HepG2 (cell line): ENCODE measurements at regions of chr11 and their contacts with region 1.

Region 1: GRCh38 chr11:73652046-73652730 is 5.8 kb downstream of the PLEKHB1 start:
- DNase-seq: peak; percentile 97
- ATAC-seq: peak; percentile 87
- H3K4me3 ChIP-seq: peak overlapping the region in 1 of 3 experiments; percentile 26; a peak in 2 of 6 replicates
- H3K27ac ChIP-seq: peak overlapping the region; percentile 89
- H3K4me1 ChIP-seq: peaks cover 79% of the 10 kb centered on the region
- H3K27me3 ChIP-seq: no peaks in the 10 kb centered on the region
- CTCF ChIP-seq: peak; percentile 37
- EP300 ChIP-seq: peak; percentile 71 to 73
- POLR2A ChIP-seq: peak in 1 of 2 experiments; percentile 46; a peak in 1 of 4 replicates
- RAD21 ChIP-seq: no peak; the same call in 1 of the 2 replicates

Region 2: DNA sequence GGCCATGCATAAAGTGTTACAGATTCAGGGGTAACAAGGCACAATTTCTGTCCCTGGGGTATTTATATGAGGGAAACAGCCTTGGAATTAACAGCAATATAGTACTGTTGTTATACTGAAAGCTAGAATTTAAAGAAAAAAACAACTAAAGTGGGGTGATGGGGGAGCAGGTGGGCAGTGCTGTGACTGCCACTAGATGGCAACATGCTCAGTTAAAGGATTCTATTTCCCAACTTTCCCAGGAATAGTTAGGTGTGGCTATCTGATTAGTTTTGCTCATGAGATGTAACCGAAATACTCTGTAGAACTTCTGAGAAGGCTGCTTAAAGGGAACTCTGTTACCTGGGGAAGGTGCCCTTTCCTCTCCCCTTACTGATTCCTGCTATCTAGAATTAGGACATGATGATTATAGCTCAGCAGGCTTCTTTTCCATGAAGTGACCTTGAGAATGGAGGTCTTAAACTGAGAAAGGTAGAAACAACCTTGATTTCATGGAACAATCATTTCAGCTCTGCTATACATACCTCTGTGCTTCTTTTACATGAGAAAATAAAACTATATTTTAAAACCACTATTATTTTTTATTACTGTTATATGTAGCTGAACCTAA is 173.3 kb before region 1 on chr11:
- CTCF ChIA-PET with region 1: no interaction called
- POLR2A ChIA-PET with region 1: no interaction called
- in situ Hi-C with region 1: loop called (anchors 10 kb)
- intact Hi-C with region 1: loop called (anchors 10 kb)
- DNase-seq: peak; percentile 37
- ATAC-seq: peak; percentile 82
- H3K4me3 ChIP-seq: no peak overlapping the region
- H3K27ac ChIP-seq: no peak overlapping the region
- H3K4me1 ChIP-seq: peaks cover 8% of the 10 kb centered on the region
- H3K27me3 ChIP-seq: no peaks in the 10 kb centered on the region
- CTCF ChIP-seq: peak; percentile 74
- EP300 ChIP-seq: no peak
- POLR2A ChIP-seq: no peak
- RAD21 ChIP-seq: peak; percentile 50; the same call in 1 of the 2 replicates

Region 3: DNA sequence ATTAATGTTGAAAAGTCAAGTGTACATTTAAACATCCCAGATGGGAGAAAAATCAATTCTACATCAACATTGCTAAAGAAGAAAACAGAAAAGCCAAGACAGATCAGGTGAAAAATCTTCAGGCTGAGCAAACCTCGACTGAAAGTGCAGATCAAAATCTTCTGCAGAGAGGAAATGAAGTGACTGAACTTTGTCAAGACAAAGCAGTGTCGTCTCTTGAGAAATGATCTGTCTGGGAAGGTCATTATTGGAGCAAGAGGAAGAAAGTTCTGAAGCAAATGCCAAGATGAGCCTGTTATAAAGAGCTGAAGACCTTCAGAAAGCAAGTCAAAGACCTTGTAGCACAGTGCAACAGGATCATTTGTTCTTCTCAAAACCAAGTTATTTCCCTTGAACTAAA is 11.6 kb before region 1 on chr11:
- CTCF ChIA-PET with region 1: no interaction called
- POLR2A ChIA-PET with region 1: interaction called, 3 read pairs
- in situ Hi-C with region 1: no loop called
- intact Hi-C with region 1: loop called (anchors 2 kb)
- DNase-seq: no peak
- ATAC-seq: no peak
- H3K4me3 ChIP-seq: no peak overlapping the region
- H3K27ac ChIP-seq: no peak overlapping the region
- H3K4me1 ChIP-seq: peaks cover 7% of the 10 kb centered on the region; the same call in 1 of the 2 replicates
- H3K27me3 ChIP-seq: no peaks in the 10 kb centered on the region
- CTCF ChIP-seq: no peak
- EP300 ChIP-seq: no peak
- POLR2A ChIP-seq: no peak
- RAD21 ChIP-seq: no peak

Region 4: GRCh38 chr11:74237541-74237940 is 585.4 kb after region 1 on chr11:
- CTCF ChIA-PET with region 1: no interaction called
- POLR2A ChIA-PET with region 1: no interaction called
- in situ Hi-C with region 1: no loop called
- intact Hi-C with region 1: no loop called
- DNase-seq: no peak
- ATAC-seq: no peak
- H3K4me3 ChIP-seq: no peak overlapping the region
- H3K27ac ChIP-seq: no peak overlapping the region
- H3K4me1 ChIP-seq: no peaks in the 10 kb centered on the region
- H3K27me3 ChIP-seq: no peaks in the 10 kb centered on the region
- CTCF ChIP-seq: no peak
- EP300 ChIP-seq: no peak
- POLR2A ChIP-seq: no peak
- RAD21 ChIP-seq: no peak

Region 5: GRCh38 chr11:74311352-74311926 is 659.3 kb after region 1 on chr11 and contains the start of gene P4HA3:
- CTCF ChIA-PET with region 1: no interaction called
- POLR2A ChIA-PET with region 1: no interaction called
- in situ Hi-C with region 1: no loop called
- intact Hi-C with region 1: no loop called
- DNase-seq: peak; percentile 13
- ATAC-seq: peak; percentile 95
- H3K4me3 ChIP-seq: peak within 1 kb of the TSS; percentile 32 to 67 (median 36); a peak in 4 of 6 replicates
- H3K27ac ChIP-seq: no peak within 1 kb of the TSS
- H3K4me1 ChIP-seq: peaks cover 5% of the 10 kb centered on the region
- H3K27me3 ChIP-seq: peaks cover 0 to 14% of the 10 kb centered on the region in 2 experiments; a peak in 3 of 5 replicates
- CTCF ChIP-seq: 0 out of 2 replicates have a peak, but pooled peaks have one; percentile 15
- EP300 ChIP-seq: no peak
- POLR2A ChIP-seq: no peak
- RAD21 ChIP-seq: no peak
- total RNA-seq, gene P4HA3: not detected in 2 replicates